CD8-positive, alpha-beta T cell (primary cell): ENCODE measurements at regions of chr22 and their contacts with region 1.

Region 1: DNA sequence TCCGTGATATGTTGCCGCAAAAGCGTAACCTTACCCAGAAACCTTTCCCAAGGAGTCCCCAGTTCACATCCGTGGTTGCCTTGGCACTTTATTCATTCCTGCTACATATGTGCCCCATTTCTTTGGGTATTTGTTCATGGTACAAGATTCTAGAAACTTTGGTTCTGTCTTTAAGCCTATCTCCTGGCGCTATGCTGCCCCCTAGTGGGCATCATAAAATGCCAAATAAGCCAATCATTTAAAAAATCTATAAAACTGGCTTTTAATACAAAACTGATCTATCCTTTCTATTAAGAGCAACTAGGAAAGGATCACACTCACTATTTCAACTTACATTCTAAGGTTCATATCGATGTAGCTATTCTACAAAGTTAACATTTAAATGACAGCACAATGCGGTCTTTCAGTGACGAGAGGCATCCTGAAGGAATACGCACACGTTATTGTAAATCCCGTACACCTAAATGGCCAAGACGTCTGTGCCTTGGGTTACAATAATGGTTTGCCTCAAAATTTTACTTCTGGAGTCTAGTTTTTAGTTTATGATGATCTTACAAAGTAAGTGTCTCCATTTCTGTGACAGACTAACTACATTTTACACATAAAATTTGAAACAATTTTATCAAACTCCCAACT is 16.2 kb downstream of the PIWIL3 start:
- DNase-seq: peak; percentile 7 to 71 (median 56)
- ATAC-seq: no peak
- H3K4me3 ChIP-seq: no peak overlapping the region
- H3K4me3 Mint-ChIP-seq: no peak overlapping the region
- H3K27ac ChIP-seq: no peak overlapping the region
- H3K27ac Mint-ChIP-seq: no peak overlapping the region
- H3K4me1 ChIP-seq: no peaks in the 10 kb centered on the region
- H3K4me1 Mint-ChIP-seq: no peaks in the 10 kb centered on the region
- H3K27me3 ChIP-seq: no peaks in the 10 kb centered on the region
- H3K27me3 Mint-ChIP-seq: no peaks in the 10 kb centered on the region
- CTCF ChIP-seq: peak; percentile 90

Region 2: DNA sequence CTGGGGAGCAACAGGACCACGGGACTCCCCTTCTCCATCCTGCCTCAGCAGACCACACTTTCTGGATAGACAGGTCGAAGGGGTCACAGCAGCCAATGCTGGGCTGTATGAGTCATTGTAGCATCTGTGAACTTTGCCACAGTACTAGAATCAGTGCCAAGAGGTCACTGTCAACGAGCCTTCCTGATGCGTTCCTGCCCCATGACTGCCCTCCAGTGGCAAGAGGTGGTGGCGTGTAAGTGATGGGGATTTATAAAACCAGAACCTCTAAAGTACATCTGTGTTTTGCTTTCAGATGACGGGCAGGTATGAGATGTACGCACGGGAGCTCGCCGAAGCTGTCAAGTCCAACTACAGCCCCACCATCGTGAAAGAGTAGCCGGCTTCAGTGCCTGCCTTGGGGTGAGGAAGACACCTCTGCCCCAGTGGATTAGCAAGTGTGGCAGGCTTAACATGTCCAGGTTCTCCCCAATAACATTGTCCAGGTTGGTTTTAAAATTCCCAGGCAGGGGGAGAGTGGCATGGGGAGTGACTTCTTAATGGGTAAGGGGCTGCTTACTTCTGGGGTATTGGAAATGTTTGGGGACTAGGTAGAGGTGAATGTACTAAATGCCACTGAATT is 232.8 kb before region 1 on chr22:
- CTCF ChIA-PET with region 1: no interaction called
- POLR2A ChIA-PET with region 1: no interaction called
- intact Hi-C with region 1: loop called in 1 of 2 experiments (anchors 5 kb)
- DNase-seq: peak; percentile 58 to 85 (median 72)
- ATAC-seq: peak; percentile 96
- H3K4me3 ChIP-seq: no peak overlapping the region
- H3K4me3 Mint-ChIP-seq: no peak overlapping the region
- H3K27ac ChIP-seq: no peak overlapping the region
- H3K27ac Mint-ChIP-seq: no peak overlapping the region
- H3K4me1 ChIP-seq: no peaks in the 10 kb centered on the region
- H3K4me1 Mint-ChIP-seq: peaks cover 9% of the 10 kb centered on the region
- H3K27me3 ChIP-seq: no peaks in the 10 kb centered on the region
- H3K27me3 Mint-ChIP-seq: no peaks in the 10 kb centered on the region
- CTCF ChIP-seq: peak; percentile 92

Region 3: GRCh38 chr22:24768537-24769374 is 10.5 kb after region 1 on chr22:
- CTCF ChIA-PET with region 1: interaction called, 42 read pairs
- POLR2A ChIA-PET with region 1: no interaction called
- intact Hi-C with region 1: no loop called
- DNase-seq: peak in 7 of 9 experiments; percentile 9 to 62 (median 29)
- ATAC-seq: no peak
- H3K4me3 ChIP-seq: no peak overlapping the region
- H3K4me3 Mint-ChIP-seq: no peak overlapping the region
- H3K27ac ChIP-seq: no peak overlapping the region
- H3K27ac Mint-ChIP-seq: no peak overlapping the region
- H3K4me1 ChIP-seq: no peaks in the 10 kb centered on the region
- H3K4me1 Mint-ChIP-seq: no peaks in the 10 kb centered on the region
- H3K27me3 ChIP-seq: no peaks in the 10 kb centered on the region
- H3K27me3 Mint-ChIP-seq: peaks cover 7% of the 10 kb centered on the region
- CTCF ChIP-seq: peak; percentile 39